WTC11 (cell line): ENCODE measurements at regions of chr20 and their contacts with region 1.

Region 1: GRCh38 chr20:60926519-60927230 is 325.4 kb upstream of the CDH4 start:
- DNase-seq: no peak
- ATAC-seq: no peak
- H3K4me3 Mint-ChIP-seq: no peak overlapping the region
- H3K27ac Mint-ChIP-seq: no peak overlapping the region
- H3K4me1 Mint-ChIP-seq: no peaks in the 10 kb centered on the region
- H3K27me3 Mint-ChIP-seq: peaks cover 78% of the 10 kb centered on the region
- CTCF ChIP-seq: no peak

Region 2: GRCh38 chr20:60913298-60913697 is 13.4 kb before region 1 on chr20:
- CTCF ChIA-PET with region 1: no interaction called
- POLR2A ChIA-PET with region 1: no interaction called
- DNase-seq: no peak
- ATAC-seq: no peak
- H3K4me3 Mint-ChIP-seq: no peak overlapping the region
- H3K27ac Mint-ChIP-seq: no peak overlapping the region
- H3K4me1 Mint-ChIP-seq: no peaks in the 10 kb centered on the region
- H3K27me3 Mint-ChIP-seq: peaks cover 74% of the 10 kb centered on the region
- CTCF ChIP-seq: no peak

Region 3: DNA sequence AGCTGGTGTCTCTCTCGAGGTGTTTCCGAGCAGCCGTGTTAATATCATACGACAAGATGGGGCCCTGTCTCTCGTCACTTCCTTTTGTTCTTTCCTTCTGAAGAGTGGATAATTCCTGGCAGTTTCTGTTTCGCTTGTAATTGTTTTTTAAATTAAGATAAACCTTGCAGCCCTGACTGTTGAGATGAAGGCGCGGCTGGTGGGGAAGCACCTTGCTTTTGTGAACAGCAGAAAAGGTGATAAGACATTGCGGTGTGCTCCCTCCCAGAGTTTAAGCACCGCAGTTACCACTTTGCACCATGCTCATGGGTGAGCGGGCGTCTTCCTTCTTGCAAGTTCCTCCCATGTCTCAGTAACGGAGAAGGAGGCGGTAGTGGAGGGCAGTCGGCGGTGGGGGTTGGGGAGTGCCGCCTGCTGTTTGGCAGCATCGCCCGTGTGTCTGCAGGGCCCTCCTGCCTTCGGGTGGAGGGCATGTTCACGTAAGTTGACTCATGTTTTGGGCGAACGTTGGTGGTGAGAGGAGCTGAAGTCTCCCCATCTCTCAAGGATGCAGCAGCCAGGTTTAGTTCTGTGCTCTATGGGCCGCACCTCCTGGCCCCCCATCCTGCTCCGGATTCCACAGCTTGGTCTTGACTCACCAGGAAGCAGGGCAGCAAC is 793.1 kb after region 1 on chr20:
- CTCF ChIA-PET with region 1: no interaction called
- POLR2A ChIA-PET with region 1: interaction called, 10 read pairs
- DNase-seq: no peak
- ATAC-seq: no peak
- H3K4me3 Mint-ChIP-seq: no peak overlapping the region
- H3K27ac Mint-ChIP-seq: peak overlapping the region; percentile 51
- H3K4me1 Mint-ChIP-seq: peaks cover 16% of the 10 kb centered on the region
- H3K27me3 Mint-ChIP-seq: peaks cover 18% of the 10 kb centered on the region
- CTCF ChIP-seq: no peak